Breast epithelium (tissue), 4 donors: ENCODE measurements at regions of chr14 and their contacts with region 1.

Region 1: GRCh38 chr14:32977913-32978312 is 39.2 kb downstream of the NPAS3 start:
- DNase-seq: no peak
- H3K4me3 ChIP-seq: no peak overlapping the region
- H3K27ac ChIP-seq: no peak overlapping the region
- H3K4me1 ChIP-seq: no peaks in the 10 kb centered on the region
- H3K27me3 ChIP-seq: no peaks in the 10 kb centered on the region
- CTCF ChIP-seq: no peak
- POLR2A ChIP-seq: no peak

Region 2: DNA sequence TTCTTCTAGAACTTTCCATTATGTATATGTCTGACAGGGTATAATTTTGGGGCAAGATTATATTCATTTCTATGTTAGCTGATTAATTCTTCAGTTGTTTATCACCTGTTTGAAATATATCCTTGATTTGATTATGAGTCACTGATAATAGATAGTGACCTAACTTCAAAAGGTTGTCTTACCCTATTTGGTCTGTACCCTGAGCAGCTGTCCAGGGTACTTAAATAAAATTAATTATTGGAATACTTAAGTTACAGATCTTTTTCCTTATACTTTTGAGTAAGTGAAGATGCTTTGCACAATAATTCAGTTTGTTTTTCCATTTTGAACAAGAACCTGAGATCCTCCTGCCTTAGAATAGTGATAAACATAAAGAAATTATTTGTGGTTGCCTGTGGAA is 52.5 kb before region 1 on chr14:
- intact Hi-C with region 1: no loop called
- DNase-seq: no peak
- H3K4me3 ChIP-seq: no peak overlapping the region
- H3K27ac ChIP-seq: no peak overlapping the region
- H3K4me1 ChIP-seq: no peaks in the 10 kb centered on the region
- H3K27me3 ChIP-seq: no peaks in the 10 kb centered on the region
- CTCF ChIP-seq: no peak
- POLR2A ChIP-seq: no peak

Region 3: DNA sequence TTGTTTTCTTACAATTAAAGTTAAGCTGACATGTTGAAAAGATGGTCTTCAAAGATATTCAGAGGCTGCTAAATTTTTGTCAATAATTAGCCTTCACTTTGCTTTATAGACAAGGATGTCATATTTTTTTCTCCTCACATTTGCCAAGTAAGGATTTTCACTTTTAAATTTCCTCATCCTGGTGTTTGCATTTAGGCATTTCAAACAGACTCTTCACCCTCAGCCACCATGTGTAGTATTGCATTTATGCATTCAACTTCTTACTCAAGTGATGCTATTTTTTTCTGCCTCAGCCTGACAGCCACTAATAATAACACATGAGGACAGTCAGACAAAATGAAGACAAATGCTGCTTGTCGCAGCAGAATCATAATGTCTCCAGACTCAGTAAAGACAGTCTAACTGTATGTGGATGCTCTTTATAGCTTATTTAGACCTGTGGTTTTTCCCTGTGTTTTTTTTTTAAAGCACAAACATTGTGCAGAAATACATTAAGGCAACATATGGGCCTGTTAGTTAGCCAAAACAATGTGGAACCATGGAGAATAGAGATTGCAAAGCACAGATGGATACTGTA is 442.2 kb after region 1 on chr14:
- intact Hi-C with region 1: loop called (anchors 10 kb)
- DNase-seq: no peak
- H3K4me3 ChIP-seq: no peak overlapping the region
- H3K27ac ChIP-seq: no peak overlapping the region
- H3K4me1 ChIP-seq: no peaks in the 10 kb centered on the region
- H3K27me3 ChIP-seq: no peaks in the 10 kb centered on the region
- CTCF ChIP-seq: no peak
- POLR2A ChIP-seq: no peak